ENCODE measurements at regions of chr17 and their contacts with region 1.

Region 1: GRCh38 chr17:65261682-65262636 is 124.8 kb downstream of the RGS9 start:
- DNase-seq: no peak
- H3K4me3 Mint-ChIP-seq: peak overlapping the region; percentile 53
- H3K27ac Mint-ChIP-seq: peak overlapping the region; percentile 58
- H3K4me1 Mint-ChIP-seq: peaks cover 37% of the 10 kb centered on the region
- H3K27me3 Mint-ChIP-seq: peaks cover 23% of the 10 kb centered on the region

Region 2: GRCh38 chr17:65013613-65014391 is 248.2 kb before region 1 on chr17:
- intact Hi-C with region 1: no loop called
- DNase-seq: peak; percentile 77
- H3K4me3 Mint-ChIP-seq: peak overlapping the region; percentile 12
- H3K27ac Mint-ChIP-seq: no peak overlapping the region
- H3K4me1 Mint-ChIP-seq: peaks cover 55% of the 10 kb centered on the region
- H3K27me3 Mint-ChIP-seq: no peaks in the 10 kb centered on the region

Region 3: GRCh38 chr17:65523853-65524664 is 262.1 kb after region 1 on chr17:
- intact Hi-C with region 1: loop called (anchors 1 kb)
- DNase-seq: peak; percentile 74
- H3K4me3 Mint-ChIP-seq: peak overlapping the region; percentile 73
- H3K27ac Mint-ChIP-seq: peak overlapping the region; percentile 87
- H3K4me1 Mint-ChIP-seq: peaks cover 31% of the 10 kb centered on the region
- H3K27me3 Mint-ChIP-seq: peaks cover 44% of the 10 kb centered on the region

Measured in activated CD4-positive, alpha-beta T cell treated with anti-CD3 and anti-CD28 coated beads, Interleukin-2, amount 10 ng/mL, durations not matched to agents 24 days and 14 days (primary cell).